Sigmoid colon (tissue), 7 donors: ENCODE measurements at regions of chr14 and their contacts with region 1.

Region 1: GRCh38 chr14:74018586-74019407 is at the starts of genes BBOF1 and ENTPD5:
- DNase-seq: peak; percentile 92
- H3K4me3 ChIP-seq: peak within 1 kb of the TSS; percentile 83 to 98 (median 91)
- H3K27ac ChIP-seq: peak within 1 kb of the TSS; percentile 96 to 98 (median 98)
- H3K4me1 ChIP-seq: peaks cover 0 to 19% (median 15%) of the 10 kb centered on the region in 4 donors
- H3K27me3 ChIP-seq: no peaks in the 10 kb centered on the region
- CTCF ChIP-seq: no peak
- EP300 ChIP-seq: no peak
- POLR2A ChIP-seq: peak; percentile 57 to 64
- total RNA-seq, gene BBOF1: 8.9 to 13.6 (median 11.6) TPM
- total RNA-seq, gene ENTPD5: 8.0 to 11.1 (median 8.7) TPM

Region 2: GRCh38 chr14:73949744-73950734 is 68.8 kb before region 1 on chr14 and contains the starts of genes COQ6 and FAM161B:
- intact Hi-C with region 1: loop called (anchors 1 kb)
- DNase-seq: peak; percentile 98
- H3K4me3 ChIP-seq: peak within 1 kb of the TSS; percentile 58 to 98 (median 76)
- H3K27ac ChIP-seq: peak within 1 kb of the TSS; percentile 86 to 96 (median 92)
- H3K4me1 ChIP-seq: peaks cover 0 to 22% (median 16%) of the 10 kb centered on the region in 4 donors
- H3K27me3 ChIP-seq: no peaks in the 10 kb centered on the region
- CTCF ChIP-seq: no peak
- EP300 ChIP-seq: no peak
- POLR2A ChIP-seq: peak; percentile 73 to 74
- total RNA-seq, gene COQ6: 23.8 to 31.6 (median 30.6) TPM
- total RNA-seq, gene FAM161B: 3.8 to 5.3 (median 4.5) TPM

Region 3: GRCh38 chr14:74038015-74038859 is 19.4 kb after region 1 on chr14:
- intact Hi-C with region 1: no loop called
- DNase-seq: no peak
- H3K4me3 ChIP-seq: no peak overlapping the region
- H3K27ac ChIP-seq: no peak overlapping the region
- H3K4me1 ChIP-seq: no peaks in the 10 kb centered on the region
- H3K27me3 ChIP-seq: no peaks in the 10 kb centered on the region
- CTCF ChIP-seq: peak; percentile 17 to 60 (median 52)
- EP300 ChIP-seq: no peak
- POLR2A ChIP-seq: no peak

Region 4: DNA sequence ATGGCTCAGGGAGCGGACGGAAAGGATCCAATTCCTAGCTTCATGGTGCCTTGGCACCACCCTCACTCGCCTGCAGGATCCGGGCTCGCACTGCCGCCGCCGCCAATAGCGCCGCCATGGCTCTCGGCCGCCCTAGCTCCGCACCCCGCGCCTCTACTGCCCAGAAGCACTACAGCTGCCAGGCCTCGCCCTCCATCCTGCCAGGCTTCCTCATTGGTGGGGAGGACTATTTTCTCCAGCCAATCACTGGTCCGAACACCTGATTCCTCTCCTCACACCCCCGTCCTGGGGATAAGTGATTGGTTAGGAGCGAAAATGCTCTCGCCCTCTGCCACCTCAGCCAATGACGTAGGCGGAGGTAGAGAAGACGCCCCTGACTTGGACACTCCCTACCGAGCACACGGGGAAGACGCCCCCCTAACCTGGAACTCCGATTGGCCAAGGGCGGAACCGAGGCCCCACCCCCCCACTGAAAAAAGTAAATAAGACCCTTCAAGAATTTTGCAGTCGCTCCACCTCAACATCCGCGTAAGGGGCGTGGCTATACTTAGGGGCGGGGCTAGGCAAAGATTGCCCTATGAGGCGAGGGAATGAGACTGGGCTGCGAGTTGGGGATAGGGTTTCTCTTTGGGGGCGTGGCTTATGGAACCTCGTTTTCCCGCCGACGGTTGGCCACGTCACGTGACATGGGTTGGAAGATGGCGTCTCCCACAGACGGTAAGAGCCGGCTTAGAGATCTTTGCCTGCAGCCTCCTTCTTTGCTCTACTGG is 65.7 kb after region 1 on chr14 and contains the starts of genes ALDH6A1 and LIN52:
- intact Hi-C with region 1: loop called (anchors 2 kb)
- DNase-seq: peak; percentile 100
- H3K4me3 ChIP-seq: peak within 1 kb of the TSS; percentile 64 to 81 (median 76)
- H3K27ac ChIP-seq: peak within 1 kb of the TSS; percentile 84 to 93 (median 90)
- H3K4me1 ChIP-seq: peaks cover 0 to 27% (median 20%) of the 10 kb centered on the region in 4 donors
- H3K27me3 ChIP-seq: no peaks in the 10 kb centered on the region
- CTCF ChIP-seq: no peak
- EP300 ChIP-seq: peak in 1 of 4 donors; percentile 28
- POLR2A ChIP-seq: peak; percentile 87 to 94
- total RNA-seq, gene ALDH6A1: 19.9 to 33.5 (median 30.6) TPM
- total RNA-seq, gene LIN52: 9.1 to 11.1 (median 10.3) TPM